ENCODE measurements at regions of chrX and their contacts with region 1.

Region 1: DNA sequence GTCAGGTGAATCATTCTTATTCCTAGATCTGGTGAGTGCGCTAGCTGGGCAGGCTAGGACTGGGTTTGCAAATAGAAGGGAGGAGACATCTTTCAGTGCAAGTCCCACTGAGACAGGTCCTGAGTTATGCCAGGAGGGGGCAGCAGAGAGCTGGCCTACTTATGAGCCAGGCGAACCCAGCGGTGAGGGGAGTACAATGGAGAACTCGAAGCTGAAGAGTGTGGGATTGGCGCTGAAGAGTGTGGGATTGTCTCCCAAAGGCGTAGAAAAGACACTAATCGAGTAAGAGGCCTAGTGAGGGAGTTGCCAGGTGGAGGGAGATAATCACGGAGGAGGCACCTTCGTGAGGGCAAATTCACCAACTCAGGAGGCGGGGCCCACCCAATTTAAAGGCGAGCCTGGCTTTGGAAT is 91.7 kb upstream of the CXorf66 start:
- DNase-seq: peak; percentile 66 to 90 (median 82)

Region 2: DNA sequence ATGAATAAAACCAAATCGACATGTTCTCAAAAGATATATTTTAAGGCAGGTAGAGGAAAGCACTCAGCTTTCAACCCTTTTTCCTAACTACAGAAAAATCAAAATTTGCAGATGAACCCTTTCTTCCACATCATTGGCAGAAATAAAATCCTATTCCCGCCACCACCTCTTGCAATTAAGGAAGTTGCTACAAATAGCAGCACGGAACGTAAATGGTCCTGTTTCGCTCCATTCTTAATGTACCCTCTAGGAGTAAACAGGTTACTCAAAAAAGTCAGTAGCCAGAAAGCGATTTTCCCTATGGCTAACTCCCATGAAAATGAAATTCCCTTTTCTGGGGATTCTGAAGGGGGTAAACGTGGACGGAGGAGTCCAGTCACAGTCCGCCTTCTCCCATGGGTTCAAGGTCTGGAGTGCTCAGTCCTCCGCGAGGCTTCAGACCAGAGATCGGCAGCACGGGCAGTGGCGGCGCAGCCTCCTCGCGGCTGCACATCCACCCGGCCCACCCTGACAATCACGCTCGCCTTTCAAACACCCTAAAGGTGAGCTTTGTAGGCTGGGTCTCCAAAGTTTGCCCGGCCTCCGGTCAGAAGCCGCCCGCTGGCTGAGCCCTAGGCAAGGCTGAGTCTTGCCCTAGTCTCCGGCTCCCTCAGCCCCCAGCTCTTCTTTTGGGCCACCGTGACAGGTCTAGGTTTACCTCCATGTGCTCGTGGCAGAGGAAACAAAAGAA is 125.9 kb before region 1 on chrX:
- intact Hi-C with region 1: no loop called
- DNase-seq: peak in 27 of 42 donors; percentile 3 to 51 (median 17)

Region 3: DNA sequence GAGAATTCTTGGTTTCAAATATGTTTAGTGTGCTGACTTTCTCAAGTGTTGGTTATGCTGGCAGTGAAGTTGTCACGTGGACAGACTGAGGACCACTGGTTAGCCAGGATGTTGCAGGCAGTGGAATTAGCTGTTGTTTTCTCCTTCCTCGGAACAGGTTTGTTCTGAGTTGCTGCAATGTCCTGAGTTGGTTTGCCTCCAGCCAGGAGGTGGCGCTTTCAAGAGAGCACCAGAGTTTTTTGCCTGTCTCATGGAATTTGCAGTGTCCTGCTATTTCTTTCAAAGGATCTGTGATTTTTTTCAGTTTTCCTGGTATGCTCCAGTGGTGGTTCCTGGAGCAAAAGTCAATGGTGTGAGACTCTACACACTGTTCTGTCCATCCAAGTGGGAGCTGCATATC is 66.4 kb after region 1 on chrX:
- intact Hi-C with region 1: loop called (anchors 10 kb)
- DNase-seq: no peak

Region 4: GRCh38 chrX:140510895-140511295 is 453.9 kb after region 1 on chrX:
- intact Hi-C with region 1: loop called (anchors 10 kb)
- DNase-seq: no peak

Region 5: GRCh38 chrX:140664939-140665338 is 607.9 kb after region 1 on chrX:
- intact Hi-C with region 1: loop called (anchors 10 kb)
- DNase-seq: no peak